Natural killer cell (primary cell): ENCODE measurements at regions of chr11 and their contacts with region 1.

Region 1: DNA sequence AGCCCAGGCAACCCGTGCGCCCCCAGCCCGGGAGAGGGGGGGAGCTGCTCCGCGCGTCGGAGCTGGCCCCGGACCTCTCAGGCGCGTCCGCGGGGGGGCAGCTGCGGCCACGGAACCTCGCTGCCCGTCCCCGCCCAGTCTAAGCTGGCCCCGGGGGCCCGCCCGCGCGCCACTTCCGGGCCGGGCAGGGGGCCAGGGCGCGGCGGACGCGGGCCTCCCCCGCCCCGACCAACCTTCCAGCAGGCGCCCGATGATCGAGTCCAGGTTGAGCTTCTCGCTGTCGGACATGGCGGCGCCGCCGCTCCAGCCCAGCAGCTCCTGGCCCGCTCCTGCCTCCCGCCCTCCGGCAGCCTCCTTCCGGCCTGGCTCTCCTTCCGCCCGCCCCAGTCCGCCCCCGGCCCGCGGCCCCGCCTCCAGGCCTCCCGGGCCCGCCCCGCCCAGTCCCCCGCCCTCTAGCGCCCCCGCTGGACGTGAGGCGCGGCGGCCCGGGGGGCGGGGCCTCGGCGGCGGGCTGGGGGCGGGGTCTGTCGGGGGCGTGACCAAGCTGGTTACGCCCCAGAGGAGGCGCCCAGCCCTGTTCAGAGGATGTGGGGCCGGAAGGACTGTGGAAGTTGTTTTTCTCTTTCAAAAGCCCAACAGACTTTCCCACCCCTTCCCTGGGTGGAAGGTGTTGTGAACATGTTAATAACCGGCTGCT is at the start of gene PPP1CA:
- DNase-seq: peak; percentile 93 to 94
- ATAC-seq: peak; percentile 79 to 93 (median 82)
- H3K4me3 ChIP-seq: peak within 1 kb of the TSS; percentile 69
- H3K4me3 Mint-ChIP-seq: peak within 1 kb of the TSS; percentile 94
- H3K27ac ChIP-seq: peak within 1 kb of the TSS; percentile 63
- H3K27ac Mint-ChIP-seq: peak within 1 kb of the TSS; percentile 86 to 96
- H3K4me1 ChIP-seq: peaks cover 91% of the 10 kb centered on the region
- H3K4me1 Mint-ChIP-seq: peaks cover 44 to 59% of the 10 kb centered on the region in 2 donors
- H3K27me3 ChIP-seq: no peaks in the 10 kb centered on the region
- H3K27me3 Mint-ChIP-seq: no peaks in the 10 kb centered on the region
- CTCF ChIP-seq: peak; percentile 60
- total RNA-seq, gene PPP1CA: 222 to 245 (median 233) TPM

Region 2: DNA sequence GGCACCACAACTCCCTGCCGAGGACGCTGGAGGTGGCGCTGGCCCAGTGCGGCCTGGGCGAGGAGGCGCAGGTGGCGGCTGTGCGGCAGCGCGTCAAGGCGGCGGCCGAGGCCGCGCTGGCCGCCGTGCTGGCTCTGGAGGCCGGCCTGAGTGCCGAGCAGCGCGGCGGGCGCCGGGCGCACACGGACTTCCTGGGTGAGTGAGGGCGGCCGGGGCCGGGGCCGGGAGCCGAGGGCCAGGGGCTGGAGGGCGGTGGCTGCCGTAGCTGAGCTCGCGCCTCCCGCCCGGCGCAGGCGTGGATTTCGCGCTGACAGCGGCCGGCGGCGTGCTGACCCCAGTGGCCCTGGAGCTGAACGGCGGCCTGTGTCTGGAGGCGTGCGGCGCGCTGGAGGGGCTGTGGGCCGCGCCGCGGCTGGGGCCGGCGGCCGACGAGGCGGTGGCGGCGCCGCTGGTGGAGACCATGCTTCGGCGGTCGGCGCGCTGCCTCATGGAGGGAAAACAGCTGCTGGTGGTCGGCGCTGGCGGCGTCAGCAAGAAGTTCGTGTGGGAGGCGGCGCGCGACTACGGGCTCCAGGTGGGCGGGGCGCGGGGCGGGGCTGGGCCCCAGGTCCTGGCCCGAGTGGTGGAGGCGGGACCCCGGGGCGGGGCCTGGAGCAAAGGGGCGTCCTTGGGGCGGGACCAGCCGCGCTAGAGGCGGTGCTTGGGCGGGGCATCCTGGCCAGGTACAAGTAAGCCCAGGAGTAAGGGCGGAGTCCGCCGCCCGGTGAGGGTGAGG is 19.2 kb after region 1 on chr11:
- intact Hi-C with region 1: loop called (anchors 2 kb)
- DNase-seq: peak; percentile 97 to 98
- ATAC-seq: peak; percentile 92 to 99 (median 95)
- H3K4me3 ChIP-seq: peak overlapping the region; percentile 38
- H3K4me3 Mint-ChIP-seq: peak overlapping the region; percentile 79
- H3K27ac ChIP-seq: peak overlapping the region; percentile 79
- H3K27ac Mint-ChIP-seq: peak overlapping the region; percentile 83 to 87
- H3K4me1 ChIP-seq: peaks cover 60% of the 10 kb centered on the region
- H3K4me1 Mint-ChIP-seq: peaks cover 21 to 70% of the 10 kb centered on the region in 2 donors
- H3K27me3 ChIP-seq: no peaks in the 10 kb centered on the region
- H3K27me3 Mint-ChIP-seq: no peaks in the 10 kb centered on the region
- CTCF ChIP-seq: no peak

Region 3: GRCh38 chr11:67436459-67437081 is 34.9 kb after region 1 on chr11:
- intact Hi-C with region 1: loop called (anchors 2 kb)
- DNase-seq: peak in 1 of 2 donors; percentile 71
- ATAC-seq: peak in 2 of 3 donors; percentile 13 to 24
- H3K4me3 ChIP-seq: peak overlapping the region; percentile 81
- H3K4me3 Mint-ChIP-seq: peak overlapping the region; percentile 95
- H3K27ac ChIP-seq: peak overlapping the region; percentile 41
- H3K27ac Mint-ChIP-seq: peak overlapping the region; percentile 85 to 88
- H3K4me1 ChIP-seq: peaks cover 88% of the 10 kb centered on the region
- H3K4me1 Mint-ChIP-seq: peaks cover 65 to 86% of the 10 kb centered on the region in 2 donors
- H3K27me3 ChIP-seq: no peaks in the 10 kb centered on the region
- H3K27me3 Mint-ChIP-seq: no peaks in the 10 kb centered on the region
- CTCF ChIP-seq: no peak

Region 4: GRCh38 chr11:67468835-67469811 is 67.5 kb after region 1 on chr11 and contains the start of gene TMEM134:
- intact Hi-C with region 1: loop called (anchors 5 kb)
- DNase-seq: peak; percentile 88 to 94
- ATAC-seq: peak; percentile 84 to 94 (median 84)
- H3K4me3 ChIP-seq: peak within 1 kb of the TSS; percentile 66
- H3K4me3 Mint-ChIP-seq: peak within 1 kb of the TSS; percentile 85
- H3K27ac ChIP-seq: peak within 1 kb of the TSS; percentile 89
- H3K27ac Mint-ChIP-seq: peak within 1 kb of the TSS; percentile 78 to 82
- H3K4me1 ChIP-seq: peaks cover 36% of the 10 kb centered on the region
- H3K4me1 Mint-ChIP-seq: peaks cover 12 to 36% of the 10 kb centered on the region in 2 donors
- H3K27me3 ChIP-seq: no peaks in the 10 kb centered on the region
- H3K27me3 Mint-ChIP-seq: no peaks in the 10 kb centered on the region
- CTCF ChIP-seq: no peak
- total RNA-seq, gene TMEM134: 57.8 to 65.7 (median 61.2) TPM

Region 5: GRCh38 chr11:67482825-67483798 is 81.5 kb after region 1 on chr11 and contains the start of gene AIP:
- intact Hi-C with region 1: loop called (anchors 5 kb)
- DNase-seq: peak; percentile 95 to 99
- ATAC-seq: peak; percentile 86 to 96 (median 92)
- H3K4me3 ChIP-seq: peak within 1 kb of the TSS; percentile 48
- H3K4me3 Mint-ChIP-seq: peak within 1 kb of the TSS; percentile 99
- H3K27ac ChIP-seq: peak within 1 kb of the TSS; percentile 74
- H3K27ac Mint-ChIP-seq: peak within 1 kb of the TSS; percentile 97 to 98
- H3K4me1 ChIP-seq: peaks cover 55% of the 10 kb centered on the region
- H3K4me1 Mint-ChIP-seq: peaks cover 50 to 52% of the 10 kb centered on the region in 2 donors
- H3K27me3 ChIP-seq: no peaks in the 10 kb centered on the region
- H3K27me3 Mint-ChIP-seq: no peaks in the 10 kb centered on the region
- CTCF ChIP-seq: no peak
- total RNA-seq, gene AIP: 93.3 to 113 (median 98.1) TPM

Region 6: DNA sequence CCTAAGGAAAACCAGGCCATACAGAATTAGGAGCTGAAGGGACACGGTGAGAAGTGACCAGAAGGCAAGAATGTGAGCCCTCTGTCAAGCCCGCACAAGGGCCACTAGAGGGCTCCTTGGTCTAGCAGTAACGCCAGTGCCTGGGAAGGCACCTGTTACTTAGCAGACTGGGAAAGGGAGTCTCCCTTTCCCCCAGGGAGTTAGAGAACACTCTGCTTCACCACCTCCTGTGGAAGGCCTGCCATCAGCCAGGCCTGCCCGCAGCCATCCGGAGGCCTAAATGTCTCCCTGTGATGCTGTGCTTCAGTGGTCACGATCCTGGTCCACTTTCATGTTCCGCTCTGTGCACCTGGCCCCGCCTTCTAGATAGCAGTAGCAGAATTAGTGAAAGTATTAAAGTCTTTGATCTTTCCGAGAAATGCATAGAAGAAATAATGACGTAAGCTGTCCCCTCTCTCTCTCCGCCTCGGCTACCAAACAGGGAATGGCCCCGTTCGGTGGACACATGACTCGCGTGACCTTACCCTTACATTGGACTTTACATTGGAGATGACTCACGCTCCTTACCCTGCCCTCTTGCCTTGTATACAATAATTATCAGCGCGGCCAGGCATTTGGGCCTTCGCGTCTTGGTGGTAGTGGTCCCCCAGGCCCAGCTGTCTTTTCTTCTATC is 171.2 kb after region 1 on chr11:
- intact Hi-C with region 1: no loop called
- DNase-seq: peak; percentile 31 to 60
- ATAC-seq: peak in 2 of 3 donors; percentile 34 to 44
- H3K4me3 ChIP-seq: no peak overlapping the region
- H3K4me3 Mint-ChIP-seq: no peak overlapping the region
- H3K27ac ChIP-seq: no peak overlapping the region
- H3K27ac Mint-ChIP-seq: no peak overlapping the region
- H3K4me1 ChIP-seq: no peaks in the 10 kb centered on the region
- H3K4me1 Mint-ChIP-seq: peaks cover 0 to 5% of the 10 kb centered on the region in 2 donors
- H3K27me3 ChIP-seq: no peaks in the 10 kb centered on the region
- H3K27me3 Mint-ChIP-seq: peaks cover 0 to 6% of the 10 kb centered on the region in 2 donors
- CTCF ChIP-seq: peak; percentile 65